Activated naive CD4-positive, alpha-beta T cell treated with anti-CD3 and anti-CD28 coated beads, Interleukin-2, amount 10 ng/mL, durations not matched to agents 7 days and 5 days (primary cell): ENCODE measurements at regions of chr1 and their contacts with region 1.

Region 1: GRCh38 chr1:25487628-25488027 is 55.8 kb upstream of the LDLRAP1 start:
- DNase-seq: peak; percentile 58
- H3K4me3 Mint-ChIP-seq: no peak overlapping the region
- H3K27ac Mint-ChIP-seq: no peak overlapping the region
- H3K4me1 Mint-ChIP-seq: no peaks in the 10 kb centered on the region
- H3K27me3 Mint-ChIP-seq: no peaks in the 10 kb centered on the region

Region 2: GRCh38 chr1:25469177-25469576 is 18.5 kb before region 1 on chr1:
- CTCF ChIA-PET with region 1: interaction called, 11 read pairs
- DNase-seq: no peak
- H3K4me3 Mint-ChIP-seq: no peak overlapping the region
- H3K27ac Mint-ChIP-seq: no peak overlapping the region
- H3K4me1 Mint-ChIP-seq: peaks cover 50% of the 10 kb centered on the region
- H3K27me3 Mint-ChIP-seq: no peaks in the 10 kb centered on the region

Region 3: GRCh38 chr1:25476186-25477097 is 11.2 kb before region 1 on chr1:
- CTCF ChIA-PET with region 1: interaction called, 20 read pairs
- DNase-seq: no peak
- H3K4me3 Mint-ChIP-seq: no peak overlapping the region
- H3K27ac Mint-ChIP-seq: no peak overlapping the region
- H3K4me1 Mint-ChIP-seq: peaks cover 40% of the 10 kb centered on the region
- H3K27me3 Mint-ChIP-seq: no peaks in the 10 kb centered on the region

Region 4: DNA sequence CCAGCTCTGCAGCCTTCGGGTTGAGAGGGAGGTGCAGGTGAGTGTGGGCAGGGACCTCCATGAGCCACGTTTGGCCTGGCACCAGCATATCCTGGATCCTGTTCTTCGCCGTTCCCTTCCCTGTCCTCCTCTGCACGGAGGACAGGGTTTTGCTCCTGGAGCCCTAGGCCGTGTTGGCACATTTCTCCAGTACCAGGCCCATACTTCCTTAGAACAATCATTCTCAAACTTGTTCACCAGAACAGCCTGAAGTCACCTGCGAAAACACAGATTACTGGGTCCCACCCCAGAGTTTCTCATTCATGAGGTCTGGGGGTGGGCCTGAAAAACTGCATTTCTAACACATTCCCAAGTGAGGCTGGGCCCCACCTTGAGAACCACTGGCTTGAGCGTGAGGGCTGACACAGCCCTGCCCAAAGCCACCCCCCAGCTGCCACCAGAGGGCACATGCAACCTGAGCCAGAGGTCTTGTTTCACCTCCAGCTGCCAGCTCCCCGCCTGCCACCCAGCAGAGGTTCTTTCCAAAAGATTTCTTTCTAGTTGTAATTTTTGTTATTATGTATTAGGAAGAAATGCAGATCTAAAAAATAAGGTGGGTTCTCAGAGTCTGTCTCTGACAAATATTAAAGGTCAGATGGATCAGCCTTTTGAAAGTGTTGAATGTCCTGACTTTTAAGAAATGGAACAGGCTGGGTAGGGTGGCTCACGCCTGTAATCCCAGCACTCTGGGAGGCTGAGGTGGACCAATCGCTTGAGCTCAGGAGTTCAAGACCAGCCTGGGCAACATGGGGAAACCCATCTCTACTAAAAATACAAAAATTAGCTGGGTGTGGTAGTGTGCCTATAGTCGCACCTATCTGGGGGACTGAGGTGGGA is 16.2 kb after region 1 on chr1:
- CTCF ChIA-PET with region 1: interaction called, 10 read pairs
- DNase-seq: peak; percentile 83
- H3K4me3 Mint-ChIP-seq: no peak overlapping the region
- H3K27ac Mint-ChIP-seq: no peak overlapping the region
- H3K4me1 Mint-ChIP-seq: peaks cover 27% of the 10 kb centered on the region
- H3K27me3 Mint-ChIP-seq: peaks cover 6% of the 10 kb centered on the region